Dendritic cell treated with granulocyte-macrophage colony-stimulating factor and Interleukin-4, amounts not matched to agents 40 ng/mL and 50 ng/mL, for 4 days (primary cell): ENCODE measurements at regions of chr6 and their contacts with region 1.

Region 1: GRCh38 chr6:34315780-34316179 is 67.0 kb upstream of the SMIM29 start:
- H3K4me3 Mint-ChIP-seq: no peak overlapping the region
- H3K27ac Mint-ChIP-seq: peak overlapping the region; percentile 92
- H3K4me1 Mint-ChIP-seq: peaks cover 50% of the 10 kb centered on the region
- H3K27me3 Mint-ChIP-seq: no peaks in the 10 kb centered on the region

Region 2: DNA sequence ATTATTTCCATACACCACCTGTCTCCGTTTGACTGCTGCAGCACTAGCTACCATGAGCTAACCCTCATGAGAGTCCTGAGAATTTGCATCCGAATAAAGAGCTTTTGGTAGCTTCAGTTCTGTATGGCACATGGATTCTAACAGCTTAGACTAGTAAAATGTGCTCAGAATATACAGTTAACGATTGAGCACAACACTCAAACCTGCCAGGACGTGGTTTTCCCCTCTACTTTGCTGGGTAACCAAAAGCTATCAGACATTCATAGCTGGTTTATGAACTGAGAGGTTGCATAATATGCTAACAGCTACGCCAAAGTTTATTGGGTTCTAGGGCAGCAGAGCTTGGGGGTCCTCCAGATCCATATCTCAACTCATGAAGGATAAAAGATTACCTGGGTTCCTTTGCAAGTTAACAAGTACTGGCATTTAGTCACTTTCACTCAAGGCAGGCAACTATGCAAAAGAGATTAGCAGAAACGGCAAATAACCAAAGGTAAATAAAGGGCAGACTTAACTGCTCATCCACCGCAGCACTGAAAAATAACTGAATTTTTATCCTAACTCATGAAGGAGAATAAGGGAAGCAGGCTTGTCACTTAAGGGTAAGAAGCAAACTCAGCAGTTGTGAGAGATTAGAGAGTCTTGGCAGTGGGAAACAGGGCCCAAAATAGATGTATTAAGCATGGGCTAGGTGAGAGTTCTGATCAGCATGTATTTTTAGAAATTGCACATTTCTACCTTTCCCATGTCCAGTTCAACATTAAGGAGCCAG is 47.3 kb after region 1 on chr6:
- intact Hi-C with region 1: loop called (anchors 10 kb)
- H3K4me3 Mint-ChIP-seq: no peak overlapping the region
- H3K27ac Mint-ChIP-seq: peak overlapping the region; percentile 56
- H3K4me1 Mint-ChIP-seq: peaks cover 52% of the 10 kb centered on the region
- H3K27me3 Mint-ChIP-seq: no peaks in the 10 kb centered on the region

Region 3: GRCh38 chr6:34546551-34547321 is 231.0 kb after region 1 on chr6:
- intact Hi-C with region 1: no loop called
- H3K4me3 Mint-ChIP-seq: no peak overlapping the region
- H3K27ac Mint-ChIP-seq: no peak overlapping the region
- H3K4me1 Mint-ChIP-seq: peaks cover 33% of the 10 kb centered on the region
- H3K27me3 Mint-ChIP-seq: peaks cover 14% of the 10 kb centered on the region